K562 (cell line): ENCODE measurements at regions of chr6 and their contacts with region 1.

Region 1: DNA sequence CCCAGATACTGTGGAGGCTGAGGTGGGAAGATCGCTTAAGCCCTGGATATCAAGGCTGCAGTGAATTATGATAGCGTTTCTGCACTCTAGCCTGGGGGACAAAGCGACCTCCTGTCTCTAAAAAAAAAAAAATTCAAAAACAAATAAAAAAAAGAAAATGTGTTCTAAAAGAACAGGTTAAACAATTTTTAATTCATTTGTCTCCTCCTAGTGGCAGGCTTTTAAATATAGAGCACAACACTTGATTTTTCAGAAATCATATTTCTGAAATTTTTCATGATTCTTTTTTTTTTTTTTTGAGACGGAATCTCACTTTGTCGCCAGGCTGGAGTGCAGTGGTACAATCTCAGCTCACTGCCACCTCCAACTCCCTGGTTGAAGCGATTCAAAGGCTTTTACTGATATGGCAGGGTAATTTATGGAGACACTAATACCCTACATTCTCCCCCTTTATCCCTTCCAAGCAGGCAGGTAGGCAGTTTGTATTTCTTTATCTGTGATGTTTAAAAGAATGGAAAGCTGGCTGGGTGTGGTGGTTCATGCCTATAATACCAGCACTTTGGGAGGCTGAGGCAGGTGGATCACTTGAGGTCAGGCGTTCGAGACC is 8.7 kb upstream of the GTF3C6 start:
- DNase-seq: peak in 1 of 4 experiments; percentile 32
- ATAC-seq: no peak
- H3K4me3 ChIP-seq: no peak overlapping the region
- H3K27ac ChIP-seq: no peak overlapping the region
- H3K4me1 ChIP-seq: no peaks in the 10 kb centered on the region; a peak in 2 of 5 replicates
- H3K27me3 ChIP-seq: no peaks in the 10 kb centered on the region
- CTCF ChIP-seq: peak; percentile 46 to 76 (median 57); a peak in 5 of 6 replicates
- EP300 ChIP-seq: no peak
- POLR2A ChIP-seq: no peak
- RAD21 ChIP-seq: peak; percentile 41 to 70

Region 2: DNA sequence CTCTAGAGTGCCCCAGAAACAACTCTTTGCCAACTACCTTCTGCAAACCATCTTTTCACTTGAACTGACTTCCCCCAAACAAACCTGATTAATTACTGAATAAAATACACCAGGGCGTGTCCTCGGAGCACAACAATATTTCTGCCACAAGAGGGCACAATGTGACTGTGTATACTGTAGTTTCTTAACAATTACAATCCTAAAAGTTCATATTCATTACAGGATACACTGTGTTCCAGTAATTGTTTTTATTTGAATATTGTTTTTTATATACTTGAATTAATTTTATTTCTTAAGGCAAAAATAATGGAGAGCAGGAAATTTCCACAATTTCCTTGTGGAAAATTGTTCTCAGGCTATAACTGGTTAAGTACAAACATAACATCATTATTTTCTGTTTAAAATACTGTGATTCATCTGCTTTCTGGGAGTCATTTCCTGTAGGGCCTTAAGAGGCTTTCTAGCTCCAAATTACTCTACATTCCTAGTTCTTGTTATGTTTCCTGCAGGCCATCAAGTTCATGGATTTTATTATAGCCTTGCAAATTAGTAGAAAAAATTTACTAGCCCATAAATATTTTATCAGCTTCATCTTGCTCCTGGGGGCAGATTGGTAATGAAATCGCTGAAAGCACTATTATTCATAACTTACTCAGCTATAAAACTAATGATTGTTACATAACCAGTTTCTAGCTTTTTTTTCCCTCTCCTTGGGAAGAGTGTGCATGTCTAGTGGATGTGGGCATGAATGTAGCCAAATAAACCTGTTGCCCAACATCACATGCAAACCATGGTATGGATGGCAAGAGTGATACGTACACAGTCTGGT is 421.5 kb before region 1 on chr6:
- CTCF ChIA-PET with region 1: interaction called, 15 read pairs
- POLR2A ChIA-PET with region 1: no interaction called
- in situ Hi-C with region 1: no loop called
- intact Hi-C with region 1: loop called (anchors 2 kb)
- DNase-seq: peak; percentile 51 to 70 (median 56)
- ATAC-seq: peak; percentile 91
- H3K4me3 ChIP-seq: no peak overlapping the region
- H3K27ac ChIP-seq: no peak overlapping the region
- H3K4me1 ChIP-seq: no peaks in the 10 kb centered on the region; a peak in 1 of 5 replicates
- H3K27me3 ChIP-seq: peaks cover 5 to 13% of the 10 kb centered on the region in 2 experiments; a peak in 3 of 5 replicates
- CTCF ChIP-seq: peak; percentile 44 to 87 (median 73); a peak in 5 of 6 replicates
- EP300 ChIP-seq: no peak
- POLR2A ChIP-seq: no peak
- RAD21 ChIP-seq: peak; percentile 90 to 92

Region 3: DNA sequence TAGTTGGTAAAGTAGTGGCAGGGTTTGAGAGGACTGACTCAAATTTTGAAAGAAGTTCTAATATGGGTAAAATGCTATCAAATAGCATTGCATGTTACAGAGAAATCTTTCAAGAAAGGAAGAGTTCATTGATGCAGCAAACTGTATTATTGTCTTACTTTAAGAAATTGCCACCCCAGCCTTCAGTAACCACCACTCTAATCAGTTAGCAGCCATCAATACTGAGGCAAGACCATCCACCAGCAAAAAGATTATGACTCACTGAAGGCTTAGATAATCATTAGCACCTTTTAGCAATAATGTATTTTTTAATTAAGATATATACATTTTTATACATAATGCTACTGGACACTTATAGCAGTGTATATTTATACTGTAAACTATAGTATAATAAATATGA is 273.4 kb before region 1 on chr6:
- CTCF ChIA-PET with region 1: interaction called, 4 read pairs
- POLR2A ChIA-PET with region 1: no interaction called
- in situ Hi-C with region 1: loop called (anchors 5 kb)
- intact Hi-C with region 1: no loop called
- DNase-seq: no peak
- ATAC-seq: no peak
- H3K4me3 ChIP-seq: no peak overlapping the region
- H3K27ac ChIP-seq: no peak overlapping the region
- H3K4me1 ChIP-seq: no peaks in the 10 kb centered on the region
- H3K27me3 ChIP-seq: no peaks in the 10 kb centered on the region
- CTCF ChIP-seq: no peak
- EP300 ChIP-seq: no peak
- POLR2A ChIP-seq: no peak
- RAD21 ChIP-seq: no peak